ENCODE measurements at regions of chr10 and their contacts with region 1.

Region 1: DNA sequence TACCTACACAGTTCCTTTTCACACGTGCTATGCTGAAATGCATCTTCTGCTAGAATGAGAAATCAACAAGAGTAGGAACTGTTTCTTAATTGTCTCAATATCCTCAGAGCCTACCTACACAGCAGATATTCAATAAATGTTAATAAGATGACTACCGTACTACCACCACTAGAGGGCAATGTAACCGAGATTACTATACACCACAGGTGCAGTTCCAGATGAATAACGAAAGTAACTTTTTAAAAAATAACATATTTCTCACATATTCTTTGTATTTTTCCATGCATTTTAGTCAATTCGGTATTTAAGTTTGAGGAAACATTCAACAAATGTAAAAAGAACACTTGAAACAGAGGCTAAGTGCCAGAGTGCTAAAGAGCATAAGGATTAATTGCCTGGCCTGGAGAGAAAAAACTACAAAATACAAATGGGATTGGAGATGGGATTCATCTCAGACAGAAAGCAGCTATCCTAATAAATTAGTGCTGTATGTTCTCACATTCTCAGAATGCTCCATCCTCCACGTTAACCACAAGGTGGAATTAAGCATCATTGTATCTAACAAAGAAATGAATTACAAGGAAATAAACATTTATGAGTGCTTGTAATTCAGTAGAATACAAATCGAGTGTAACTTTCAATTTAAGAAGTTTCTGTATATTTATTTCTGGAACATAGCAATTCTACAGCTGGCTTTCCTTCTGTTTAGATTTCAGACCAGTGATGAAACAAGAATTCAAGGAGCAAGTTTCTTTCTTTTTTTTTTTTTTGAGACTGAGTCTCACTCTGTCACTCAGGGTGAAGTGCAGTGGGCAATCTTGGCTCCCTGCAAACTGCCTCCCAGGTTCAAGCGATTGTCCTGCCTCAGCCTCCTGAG is 20.3 kb upstream of the HECTD2 start:
- DNase-seq: peak; percentile 39
- CTCF ChIP-seq: peak; percentile 51

Region 2: DNA sequence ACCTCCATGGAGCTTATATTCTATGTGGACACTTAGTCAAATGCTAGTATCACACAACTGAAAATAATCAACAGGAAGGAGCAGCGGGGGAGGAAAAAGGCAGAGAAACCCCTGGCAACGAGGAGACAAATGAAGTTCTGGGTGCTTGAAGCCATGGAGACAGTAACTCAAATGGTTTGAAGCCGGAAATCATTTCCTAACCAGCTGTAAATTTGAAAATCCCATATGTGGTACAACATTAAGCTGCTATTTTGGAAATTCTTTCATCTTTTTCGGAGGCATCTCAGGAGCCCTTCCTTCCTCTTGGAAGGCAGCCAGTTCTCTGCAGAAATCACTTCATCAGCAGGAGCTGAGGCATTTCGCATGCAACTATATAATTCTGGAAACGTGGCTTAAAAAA is 151.6 kb after region 1 on chr10:
- in situ Hi-C with region 1: loop called (anchors 10 kb)
- DNase-seq: no peak
- CTCF ChIP-seq: no peak

Region 3: GRCh38 chr10:91923371-91924211 is 533.7 kb after region 1 on chr10 and contains the start of gene BTAF1:
- in situ Hi-C with region 1: loop called (anchors 10 kb)
- DNase-seq: peak; percentile 92
- CTCF ChIP-seq: no peak

Measured in GM13976 (cell line).